Activated CD8-positive, alpha-beta T cell treated with anti-CD3 and anti-CD28 coated beads for 36 hours (primary cell): ENCODE measurements at regions of chr1 and their contacts with region 1.

Region 1: DNA sequence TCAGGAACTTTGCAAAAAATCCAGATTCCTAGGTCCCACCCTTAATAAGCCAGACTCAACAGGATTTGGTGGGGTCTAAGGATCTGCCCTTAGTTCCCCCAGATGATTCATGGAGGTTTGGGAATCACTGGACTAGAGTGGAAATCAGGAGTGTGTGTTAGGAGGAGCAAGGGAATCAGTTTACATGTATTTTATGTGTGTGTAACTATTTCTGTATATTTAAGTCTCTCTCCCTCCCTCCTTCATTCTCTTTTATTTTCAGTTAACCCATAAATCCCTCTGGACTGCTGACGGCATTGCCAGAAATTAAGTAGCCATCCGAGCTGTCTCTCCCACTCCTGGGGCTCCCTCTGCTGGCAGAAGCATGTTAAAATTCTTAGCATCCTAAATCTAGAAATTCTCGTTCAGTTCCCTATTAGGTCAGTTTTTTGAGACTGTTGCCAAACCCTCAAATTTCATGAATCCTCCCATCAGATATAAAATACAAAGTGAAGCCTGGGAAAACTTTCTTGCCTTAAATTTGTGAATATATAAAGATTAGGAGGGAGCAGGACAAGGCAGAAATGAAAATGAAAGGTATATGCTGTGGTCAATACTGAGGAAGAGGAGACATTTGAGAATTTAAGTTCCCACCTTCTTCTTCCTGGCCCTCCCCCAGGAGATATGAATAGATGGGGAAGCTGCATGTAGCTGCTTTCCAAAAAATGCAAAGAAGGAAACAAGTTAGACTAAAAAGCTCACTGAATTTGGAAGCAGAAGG is 11.7 kb upstream of the HSD11B1 start:
- DNase-seq: peak; percentile 80
- ATAC-seq: peak; percentile 78
- H3K4me3 Mint-ChIP-seq: no peak overlapping the region
- H3K27ac Mint-ChIP-seq: no peak overlapping the region
- H3K4me1 Mint-ChIP-seq: peaks cover 18% of the 10 kb centered on the region
- H3K27me3 Mint-ChIP-seq: peaks cover 1% of the 10 kb centered on the region
- CTCF ChIP-seq: peak; percentile 97

Region 2: DNA sequence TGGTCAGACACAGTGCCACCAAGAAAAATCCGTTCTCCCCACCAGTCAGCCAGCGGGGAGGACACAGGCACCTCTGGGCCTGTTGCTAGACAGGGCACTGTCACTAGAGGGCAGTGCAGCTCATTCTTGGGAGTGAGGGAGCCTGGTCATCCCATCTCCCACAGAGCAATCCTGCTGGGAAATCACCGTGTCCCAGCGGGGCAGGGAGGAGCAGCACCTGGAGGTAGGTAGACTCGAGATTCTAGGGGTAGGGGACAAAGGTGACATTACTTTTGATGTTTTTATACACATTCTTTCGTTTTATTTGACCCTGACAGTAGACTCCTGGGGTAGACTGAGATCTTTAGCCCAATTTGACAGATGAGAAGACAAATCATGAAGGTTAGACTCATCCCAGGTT is 116.1 kb before region 1 on chr1:
- CTCF ChIA-PET with region 1: interaction called, 28 read pairs
- POLR2A ChIA-PET with region 1: no interaction called
- intact Hi-C with region 1: loop called (anchors 2 kb)
- DNase-seq: peak; percentile 78
- ATAC-seq: peak; percentile 97
- H3K4me3 Mint-ChIP-seq: no peak overlapping the region
- H3K27ac Mint-ChIP-seq: no peak overlapping the region
- H3K4me1 Mint-ChIP-seq: no peaks in the 10 kb centered on the region
- H3K27me3 Mint-ChIP-seq: peaks cover 3% of the 10 kb centered on the region
- CTCF ChIP-seq: peak; percentile 95

Region 3: DNA sequence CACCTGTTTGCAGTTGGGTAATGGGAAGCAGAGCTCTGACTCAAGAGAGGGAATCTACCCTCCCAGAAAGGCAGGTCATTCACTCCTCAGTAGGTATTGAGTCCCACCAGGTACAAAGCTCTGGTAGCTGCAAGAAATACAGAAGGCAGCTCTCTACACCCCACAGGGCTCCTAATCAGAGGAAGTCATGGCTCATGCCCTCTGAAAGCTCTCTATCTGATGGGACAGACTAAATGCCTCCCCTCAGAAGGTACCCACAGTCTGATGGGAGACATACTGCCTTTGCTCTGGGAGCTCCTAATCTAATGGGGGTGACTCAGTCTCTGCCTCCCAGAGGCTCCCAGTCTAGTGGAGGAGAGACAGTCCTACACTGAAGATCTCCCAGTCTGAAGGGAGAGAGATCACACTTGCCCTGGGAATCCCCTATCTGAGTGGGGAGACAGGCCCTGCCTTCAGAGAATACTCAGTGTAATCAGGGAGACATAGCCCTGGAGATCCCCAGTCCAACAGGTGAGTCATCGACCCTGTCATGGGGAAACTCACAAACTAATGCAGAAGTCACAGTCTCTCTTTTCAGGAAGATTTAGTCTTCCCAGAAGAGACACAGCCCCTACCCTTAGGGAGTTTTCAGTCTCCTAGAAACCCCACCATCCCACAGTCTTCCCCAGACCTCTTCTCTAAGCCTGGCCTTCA is 85.7 kb before region 1 on chr1:
- CTCF ChIA-PET with region 1: interaction called, 10 read pairs
- POLR2A ChIA-PET with region 1: interaction called, 3 read pairs
- intact Hi-C with region 1: loop called (anchors 1 kb)
- DNase-seq: peak; percentile 68
- ATAC-seq: peak; percentile 95
- H3K4me3 Mint-ChIP-seq: no peak overlapping the region
- H3K27ac Mint-ChIP-seq: peak overlapping the region; percentile 44
- H3K4me1 Mint-ChIP-seq: no peaks in the 10 kb centered on the region
- H3K27me3 Mint-ChIP-seq: no peaks in the 10 kb centered on the region
- CTCF ChIP-seq: no peak

Region 4: GRCh38 chr1:209674957-209675564 is 17.9 kb before region 1 on chr1 and contains the start of gene G0S2:
- CTCF ChIA-PET with region 1: interaction called, 15 read pairs
- POLR2A ChIA-PET with region 1: no interaction called
- intact Hi-C with region 1: no loop called
- DNase-seq: peak; percentile 70
- ATAC-seq: peak; percentile 52
- H3K4me3 Mint-ChIP-seq: peak within 1 kb of the TSS; percentile 69
- H3K27ac Mint-ChIP-seq: peak within 1 kb of the TSS; percentile 37
- H3K4me1 Mint-ChIP-seq: peaks cover 37% of the 10 kb centered on the region
- H3K27me3 Mint-ChIP-seq: peaks cover 53% of the 10 kb centered on the region
- CTCF ChIP-seq: no peak
- total RNA-seq, gene G0S2: 4.9 to 5.7 TPM

Region 5: DNA sequence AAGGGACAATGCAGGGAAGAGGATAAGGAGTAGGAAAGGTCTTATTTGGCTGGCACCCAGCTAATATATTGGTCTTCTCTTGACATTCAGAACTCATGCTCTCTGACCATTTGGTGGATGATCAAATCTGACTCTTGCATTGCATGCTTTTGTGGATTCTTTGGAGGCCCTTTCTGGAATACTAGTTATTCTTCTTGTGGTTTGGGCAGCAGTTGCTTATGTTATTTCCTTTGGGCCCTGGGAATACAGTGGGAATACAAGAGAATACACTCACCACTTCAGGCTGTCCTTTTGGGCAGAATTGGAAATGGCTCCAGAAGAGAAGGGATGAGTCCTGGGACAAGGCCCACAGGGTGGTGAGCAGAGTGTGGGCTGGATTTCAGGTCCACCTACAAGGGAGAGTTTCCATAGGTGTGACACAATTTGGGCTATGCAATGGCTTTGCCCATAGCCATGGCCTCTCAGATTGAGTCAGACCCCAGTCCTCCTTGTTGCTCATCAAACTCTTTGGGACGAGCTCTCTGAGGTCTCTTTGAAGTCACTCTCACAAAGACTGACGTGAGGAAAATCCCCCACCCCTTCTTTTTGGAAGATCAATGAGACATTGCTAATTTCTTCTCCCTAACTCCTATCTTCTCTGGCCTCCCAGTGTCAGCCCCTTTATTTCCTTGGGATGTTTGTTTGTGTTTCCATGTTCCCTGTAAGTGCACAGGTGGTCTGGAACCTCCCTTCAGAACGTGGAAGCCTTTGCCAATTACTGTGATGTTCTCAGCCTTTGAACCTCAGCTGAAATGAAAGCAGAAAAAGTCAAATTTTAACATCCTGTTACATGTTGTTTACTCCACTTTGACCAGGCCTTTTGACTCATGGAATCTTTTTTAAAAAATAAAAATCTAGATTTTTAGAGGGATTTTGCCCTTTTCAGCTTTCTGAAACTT is 31.1 kb after region 1 on chr1:
- CTCF ChIA-PET with region 1: interaction called, 12 read pairs
- POLR2A ChIA-PET with region 1: no interaction called
- intact Hi-C with region 1: no loop called
- DNase-seq: peak; percentile 66
- ATAC-seq: peak; percentile 84
- H3K4me3 Mint-ChIP-seq: peak overlapping the region; percentile 26
- H3K27ac Mint-ChIP-seq: peak overlapping the region; percentile 97
- H3K4me1 Mint-ChIP-seq: peaks cover 49% of the 10 kb centered on the region
- H3K27me3 Mint-ChIP-seq: no peaks in the 10 kb centered on the region
- CTCF ChIP-seq: no peak